SK-N-SH (cell line): ENCODE measurements at regions of chr2 and their contacts with region 1.

Region 1: GRCh38 chr2:10832203-10832936 is 19.8 kb upstream of the PDIA6 start:
- DNase-seq: peak; percentile 98
- H3K4me3 ChIP-seq: peak overlapping the region; percentile 14 to 33; a peak in 2 of 4 replicates
- H3K27ac ChIP-seq: no peak overlapping the region
- H3K4me1 ChIP-seq: peaks cover 0 to 29% of the 10 kb centered on the region in 2 experiments; a peak in 1 of 4 replicates
- H3K27me3 ChIP-seq: peaks cover 33% of the 10 kb centered on the region; the same call in 1 of the 2 replicates
- CTCF ChIP-seq: peak; percentile 99
- EP300 ChIP-seq: no peak
- RAD21 ChIP-seq: peak; percentile 100

Region 2: GRCh38 chr2:10717613-10718012 is 114.8 kb before region 1 on chr2:
- CTCF ChIA-PET with region 1: interaction called, 11 read pairs
- POLR2A ChIA-PET with region 1: no interaction called
- DNase-seq: no peak
- H3K4me3 ChIP-seq: no peak overlapping the region
- H3K27ac ChIP-seq: peak overlapping the region; percentile 36 to 55; a peak in 3 of 4 replicates
- H3K4me1 ChIP-seq: peaks cover 14 to 18% of the 10 kb centered on the region in 2 experiments; a peak in 3 of 4 replicates
- H3K27me3 ChIP-seq: peaks cover 29% of the 10 kb centered on the region
- CTCF ChIP-seq: no peak
- EP300 ChIP-seq: no peak; a peak in 1 of 4 replicates
- RAD21 ChIP-seq: no peak

Region 3: GRCh38 chr2:10864861-10865636 is 32.7 kb after region 1 on chr2:
- CTCF ChIA-PET with region 1: interaction called, 36 read pairs
- POLR2A ChIA-PET with region 1: no interaction called
- DNase-seq: no peak
- H3K4me3 ChIP-seq: no peak overlapping the region
- H3K27ac ChIP-seq: no peak overlapping the region
- H3K4me1 ChIP-seq: peaks cover 23 to 25% of the 10 kb centered on the region in 2 experiments
- H3K27me3 ChIP-seq: no peaks in the 10 kb centered on the region
- CTCF ChIP-seq: peak; percentile 25; the same call in 1 of the 2 replicates
- EP300 ChIP-seq: no peak
- RAD21 ChIP-seq: no peak

Region 4: GRCh38 chr2:10889651-10890215 is 57.4 kb after region 1 on chr2:
- CTCF ChIA-PET with region 1: interaction called, 21 read pairs
- POLR2A ChIA-PET with region 1: no interaction called
- DNase-seq: peak; percentile 70
- H3K4me3 ChIP-seq: no peak overlapping the region
- H3K27ac ChIP-seq: no peak overlapping the region
- H3K4me1 ChIP-seq: peaks cover 10 to 14% of the 10 kb centered on the region in 2 experiments; a peak in 2 of 4 replicates
- H3K27me3 ChIP-seq: peaks cover 13% of the 10 kb centered on the region; the same call in 1 of the 2 replicates
- CTCF ChIP-seq: no peak
- EP300 ChIP-seq: no peak
- RAD21 ChIP-seq: no peak

Region 5: DNA sequence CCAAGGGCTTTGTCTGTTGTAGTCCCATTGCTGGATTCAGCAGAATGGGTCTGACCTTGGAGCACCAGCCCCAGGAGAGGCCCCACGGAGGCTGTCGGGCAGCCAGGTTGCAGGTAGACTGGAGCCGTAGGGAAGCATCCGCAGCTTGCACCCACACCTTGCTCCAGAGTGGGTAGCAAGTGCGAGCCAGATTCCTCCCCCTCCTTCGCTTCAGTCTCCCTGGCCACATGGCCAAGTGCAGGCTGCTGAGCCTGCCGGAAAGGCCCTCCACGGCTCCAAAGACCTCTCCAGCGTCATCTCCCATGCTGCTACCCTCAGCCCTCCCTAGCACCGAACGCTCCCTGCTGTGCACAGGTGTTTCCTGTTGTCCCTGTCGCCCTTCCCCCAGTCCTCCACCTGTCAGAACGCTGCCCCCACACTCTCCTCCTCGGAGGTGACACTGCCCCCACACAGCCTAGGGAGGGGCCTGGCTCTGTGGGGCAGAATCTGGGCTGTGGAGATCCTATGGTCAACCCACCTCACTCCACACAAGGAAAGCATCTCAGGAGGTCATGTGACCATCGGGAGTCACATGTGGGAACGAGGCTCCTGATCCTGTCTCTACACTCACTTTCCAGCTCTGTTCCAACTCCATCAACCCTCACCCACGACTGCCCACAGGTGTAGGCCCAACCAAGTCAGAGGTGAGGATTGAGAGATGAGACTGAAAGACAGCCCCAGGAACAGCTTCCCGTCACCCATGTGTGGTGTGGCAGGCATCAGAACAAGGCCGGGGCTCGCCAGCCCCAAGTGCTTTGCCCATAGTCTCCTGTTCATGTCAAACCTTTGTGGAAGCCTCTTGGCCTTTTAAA is 87.6 kb after region 1 on chr2:
- CTCF ChIA-PET with region 1: interaction called, 192 read pairs
- POLR2A ChIA-PET with region 1: no interaction called
- DNase-seq: no peak
- H3K4me3 ChIP-seq: no peak overlapping the region
- H3K27ac ChIP-seq: no peak overlapping the region
- H3K4me1 ChIP-seq: peaks cover 0 to 6% of the 10 kb centered on the region in 2 experiments; a peak in 1 of 4 replicates
- H3K27me3 ChIP-seq: no peaks in the 10 kb centered on the region; the same call in 1 of the 2 replicates
- CTCF ChIP-seq: no peak
- EP300 ChIP-seq: no peak
- RAD21 ChIP-seq: no peak

Region 6: DNA sequence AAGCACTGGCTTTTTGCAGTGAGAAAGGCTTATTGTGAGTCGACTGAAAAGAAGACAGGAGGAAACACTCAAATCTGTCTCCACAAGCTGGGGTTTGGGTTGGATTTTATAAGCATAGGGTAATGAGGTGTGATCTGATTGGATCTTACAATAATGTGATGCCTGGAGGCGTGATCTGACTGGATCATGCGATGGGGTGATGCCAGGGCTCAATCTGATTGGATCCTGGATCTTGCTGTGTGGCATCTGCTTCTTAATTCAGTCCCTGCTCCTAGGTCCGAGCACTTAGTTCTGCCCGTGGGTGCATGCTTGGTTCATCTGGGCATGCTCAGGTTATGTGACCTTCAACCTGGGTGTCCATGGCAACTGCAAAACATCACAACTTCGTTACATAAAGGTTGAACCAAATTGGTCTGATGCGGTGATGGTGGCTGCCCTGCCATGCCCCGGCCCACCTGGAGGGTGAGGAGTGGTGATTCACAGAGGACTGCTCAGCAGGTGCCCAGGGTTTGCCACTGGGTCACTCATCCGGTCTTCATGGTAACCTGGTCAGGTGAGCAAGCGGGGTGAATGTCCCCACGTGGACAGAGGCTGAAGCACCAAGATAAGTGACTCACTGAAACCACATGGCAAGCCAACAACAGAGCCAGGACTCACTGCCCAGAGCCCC is 190.4 kb after region 1 on chr2:
- CTCF ChIA-PET with region 1: interaction called, 10 read pairs
- POLR2A ChIA-PET with region 1: no interaction called
- DNase-seq: no peak
- H3K4me3 ChIP-seq: no peak overlapping the region
- H3K27ac ChIP-seq: no peak overlapping the region
- H3K4me1 ChIP-seq: no peaks in the 10 kb centered on the region; a peak in 1 of 4 replicates
- H3K27me3 ChIP-seq: peaks cover 30% of the 10 kb centered on the region; the same call in 1 of the 2 replicates
- CTCF ChIP-seq: no peak
- EP300 ChIP-seq: no peak
- RAD21 ChIP-seq: no peak

Region 7: GRCh38 chr2:11124503-11125068 is 292.2 kb after region 1 on chr2:
- CTCF ChIA-PET with region 1: interaction called, 666 read pairs
- POLR2A ChIA-PET with region 1: interaction called, 3 read pairs
- DNase-seq: peak; percentile 92
- H3K4me3 ChIP-seq: no peak overlapping the region; a peak in 1 of 4 replicates
- H3K27ac ChIP-seq: no peak overlapping the region
- H3K4me1 ChIP-seq: peaks cover 0 to 2% of the 10 kb centered on the region in 2 experiments; a peak in 1 of 4 replicates
- H3K27me3 ChIP-seq: no peaks in the 10 kb centered on the region
- CTCF ChIP-seq: peak; percentile 97
- EP300 ChIP-seq: no peak
- RAD21 ChIP-seq: peak; percentile 95